Cardiac septum (tissue), 1 donor: ENCODE measurements at regions of chr6 and their contacts with region 1.

Region 1: DNA sequence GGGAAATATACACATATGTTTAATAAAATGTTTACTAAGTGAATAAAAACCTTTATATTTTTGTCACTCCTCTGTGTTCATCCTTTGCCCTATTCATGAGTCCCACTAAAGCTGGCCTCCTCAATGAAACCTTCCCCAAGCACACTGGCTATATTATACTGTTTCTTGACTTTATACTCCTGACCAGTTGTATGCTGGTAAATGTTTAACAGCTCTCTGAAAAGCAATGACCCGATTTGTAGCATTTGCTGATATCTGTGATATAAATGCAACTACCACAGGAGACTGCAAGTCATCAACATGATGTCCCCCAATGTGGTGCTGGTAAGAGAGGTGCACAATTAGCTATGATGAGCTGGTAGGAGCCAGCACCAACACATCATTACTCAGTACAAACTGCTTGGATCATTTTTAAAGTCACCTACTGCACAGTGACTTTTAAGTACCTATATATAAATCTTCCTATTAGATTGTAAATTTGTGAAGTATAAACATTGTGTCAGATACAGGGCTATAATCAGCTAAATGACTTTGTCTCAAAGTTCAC is 64.6 kb upstream of the MCM9 start:
- DNase-seq: no peak

Region 2: DNA sequence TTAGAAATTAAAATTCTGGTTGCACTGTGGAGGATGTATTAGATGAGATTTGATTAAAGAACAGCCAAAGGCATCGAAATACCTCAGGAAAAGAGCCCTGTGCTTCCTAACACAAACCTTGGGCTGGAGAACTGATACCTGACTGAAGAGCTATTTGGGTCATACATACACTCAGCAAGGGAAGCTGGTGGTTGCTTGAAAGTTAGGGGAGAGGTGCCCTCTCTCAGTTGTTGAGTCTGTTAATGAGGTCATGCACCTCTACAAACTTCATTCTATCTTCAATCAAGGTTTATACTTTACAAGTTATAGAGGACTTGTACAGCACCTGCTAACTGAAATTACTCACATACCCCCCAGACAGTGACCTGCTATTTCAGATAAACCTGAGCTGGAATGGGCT is 53.4 kb after region 1 on chr6:
- intact Hi-C with region 1: loop called (anchors 2 kb)
- DNase-seq: no peak

Region 3: DNA sequence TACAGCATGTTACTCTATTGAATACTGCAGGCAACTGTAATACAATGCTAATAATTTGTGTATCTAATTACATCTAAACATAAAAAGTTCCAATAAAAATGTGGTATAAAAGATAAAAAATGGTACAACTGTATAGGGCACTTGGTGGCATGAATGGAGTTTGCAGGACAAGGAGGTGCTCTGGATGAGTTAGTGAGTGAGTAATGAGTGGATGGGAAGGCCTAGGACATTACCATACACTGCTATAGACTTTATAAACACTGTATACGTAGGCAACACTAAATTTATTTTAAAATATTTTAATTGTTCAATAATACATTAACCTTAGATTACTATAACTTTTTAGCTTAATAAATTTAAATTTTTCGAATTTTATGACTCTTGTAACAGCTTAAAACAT is 929.6 kb after region 1 on chr6:
- intact Hi-C with region 1: no loop called
- DNase-seq: no peak